H1 (cell line): ENCODE measurements at regions of chr12 and their contacts with region 1.

Region 1: DNA sequence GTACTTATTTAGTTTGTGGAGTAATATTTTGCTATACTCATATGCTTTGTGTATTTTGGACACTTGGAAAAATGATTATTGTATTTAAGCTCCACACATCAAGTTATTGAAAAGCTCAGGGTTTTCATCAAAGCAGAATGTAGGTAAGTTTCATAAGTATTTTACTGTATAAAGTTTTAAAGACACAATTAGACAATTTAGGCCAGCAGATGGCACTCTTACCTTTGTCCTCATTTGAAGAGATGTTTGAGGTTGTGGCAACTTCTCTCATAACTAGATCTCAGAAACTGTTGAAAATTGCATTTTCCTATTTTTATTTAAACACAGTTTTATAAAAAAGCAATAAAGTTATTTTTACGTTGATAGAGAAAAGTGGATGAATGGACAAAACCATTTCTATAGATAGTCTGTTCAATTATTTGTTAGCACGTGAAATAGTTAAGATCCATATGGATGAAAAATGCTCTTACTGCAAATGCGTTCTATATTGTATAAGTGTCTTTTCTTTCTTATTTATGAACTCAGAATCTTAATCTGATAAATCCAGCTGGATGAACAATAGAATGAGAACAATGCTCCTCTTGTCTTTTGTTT is 300.0 kb downstream of the AEBP2 start:
- DNase-seq: no peak
- H3K4me3 ChIP-seq: no peak overlapping the region
- H3K27ac ChIP-seq: no peak overlapping the region
- H3K4me1 ChIP-seq: no peaks in the 10 kb centered on the region
- H3K27me3 ChIP-seq: no peaks in the 10 kb centered on the region
- CTCF ChIP-seq: peak in 2 of 3 experiments; percentile 53; a peak in 2 of 4 replicates
- EP300 ChIP-seq: no peak
- POLR2A ChIP-seq: no peak
- RAD21 ChIP-seq: peak; percentile 78 to 81

Region 2: GRCh38 chr12:19665121-19665900 is 74.0 kb before region 1 on chr12:
- CTCF ChIA-PET with region 1: no interaction called
- POLR2A ChIA-PET with region 1: no interaction called
- DNase-seq: no peak
- H3K4me3 ChIP-seq: no peak overlapping the region
- H3K27ac ChIP-seq: no peak overlapping the region
- H3K4me1 ChIP-seq: peaks cover 0 to 3% (median 0%) of the 10 kb centered on the region in 4 experiments; a peak in 1 of 7 replicates
- H3K27me3 ChIP-seq: no peaks in the 10 kb centered on the region
- CTCF ChIP-seq: no peak
- EP300 ChIP-seq: no peak
- POLR2A ChIP-seq: no peak
- RAD21 ChIP-seq: no peak

Region 3: DNA sequence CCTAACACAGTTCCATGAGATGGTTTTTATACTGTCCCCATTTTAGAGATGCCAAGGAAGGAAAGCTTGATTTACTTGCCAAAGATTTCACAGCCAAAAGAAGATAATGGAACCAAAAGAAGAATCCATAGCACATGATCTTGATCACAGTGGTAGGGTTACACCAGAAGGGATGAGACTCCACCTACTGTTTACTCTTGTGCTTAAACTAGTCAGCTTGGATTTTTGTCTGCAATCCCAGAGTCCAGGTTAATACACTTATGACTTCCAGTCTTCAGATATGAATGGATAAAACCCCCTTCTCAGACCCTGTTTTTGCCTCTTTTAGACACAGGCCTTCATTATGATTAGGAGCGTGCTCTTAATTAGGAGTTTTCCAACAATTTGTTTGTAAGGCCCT is 154.2 kb after region 1 on chr12:
- CTCF ChIA-PET with region 1: interaction called, 10 read pairs
- POLR2A ChIA-PET with region 1: no interaction called
- DNase-seq: no peak
- H3K4me3 ChIP-seq: no peak overlapping the region
- H3K27ac ChIP-seq: no peak overlapping the region
- H3K4me1 ChIP-seq: no peaks in the 10 kb centered on the region
- H3K27me3 ChIP-seq: no peaks in the 10 kb centered on the region
- CTCF ChIP-seq: peak in 2 of 3 experiments; percentile 5 to 26; a peak in 2 of 4 replicates
- EP300 ChIP-seq: no peak
- POLR2A ChIP-seq: no peak
- RAD21 ChIP-seq: peak; percentile 30 to 56; a peak in 3 of 4 replicates